HepG2 (cell line): ENCODE measurements at regions of chr15 and their contacts with region 1.

Region 1: DNA sequence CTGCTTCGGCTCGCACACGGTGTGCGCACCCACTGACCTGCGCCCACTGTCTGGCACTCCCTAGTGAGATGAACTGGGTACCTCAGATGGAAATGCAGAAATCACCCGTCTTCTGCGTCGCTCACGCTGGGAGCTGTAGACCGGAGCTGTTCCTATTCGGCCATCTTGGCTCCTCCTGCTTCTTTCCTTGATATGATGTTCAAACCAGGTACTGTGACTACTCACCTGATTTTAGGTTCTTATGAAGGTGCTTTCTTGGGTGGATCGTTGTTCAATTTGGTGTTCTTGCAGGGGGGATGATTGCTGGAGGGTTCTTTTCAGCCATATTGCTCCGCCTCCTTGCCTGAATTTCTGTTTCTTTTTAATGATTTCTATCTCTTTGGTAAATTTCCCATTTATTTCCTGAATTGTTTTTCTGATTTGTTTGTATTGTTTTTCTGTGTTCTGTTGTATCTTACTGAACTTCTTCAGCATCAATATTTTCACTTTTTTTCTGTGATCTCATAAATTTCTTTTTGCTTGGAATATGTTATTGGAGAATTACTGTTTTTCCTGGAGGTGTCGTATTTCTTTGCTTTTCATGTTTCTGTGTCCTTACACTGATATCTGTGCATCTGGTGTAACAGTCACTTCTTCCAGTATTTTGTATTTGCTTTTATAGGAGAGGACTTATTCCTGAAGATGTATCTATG is 57.1 kb downstream of the TNFAIP8L3 start:
- DNase-seq: peak; percentile 9
- ATAC-seq: peak; percentile 23; the same call in 2 of the 3 replicates
- H3K4me3 ChIP-seq: peak overlapping the region; percentile 69 to 77 (median 74)
- H3K27ac ChIP-seq: peak overlapping the region; percentile 60
- H3K4me1 ChIP-seq: peaks cover 32% of the 10 kb centered on the region
- H3K27me3 ChIP-seq: no peaks in the 10 kb centered on the region; a peak in 1 of 5 replicates
- CTCF ChIP-seq: no peak
- EP300 ChIP-seq: no peak
- POLR2A ChIP-seq: no peak
- RAD21 ChIP-seq: no peak

Region 2: DNA sequence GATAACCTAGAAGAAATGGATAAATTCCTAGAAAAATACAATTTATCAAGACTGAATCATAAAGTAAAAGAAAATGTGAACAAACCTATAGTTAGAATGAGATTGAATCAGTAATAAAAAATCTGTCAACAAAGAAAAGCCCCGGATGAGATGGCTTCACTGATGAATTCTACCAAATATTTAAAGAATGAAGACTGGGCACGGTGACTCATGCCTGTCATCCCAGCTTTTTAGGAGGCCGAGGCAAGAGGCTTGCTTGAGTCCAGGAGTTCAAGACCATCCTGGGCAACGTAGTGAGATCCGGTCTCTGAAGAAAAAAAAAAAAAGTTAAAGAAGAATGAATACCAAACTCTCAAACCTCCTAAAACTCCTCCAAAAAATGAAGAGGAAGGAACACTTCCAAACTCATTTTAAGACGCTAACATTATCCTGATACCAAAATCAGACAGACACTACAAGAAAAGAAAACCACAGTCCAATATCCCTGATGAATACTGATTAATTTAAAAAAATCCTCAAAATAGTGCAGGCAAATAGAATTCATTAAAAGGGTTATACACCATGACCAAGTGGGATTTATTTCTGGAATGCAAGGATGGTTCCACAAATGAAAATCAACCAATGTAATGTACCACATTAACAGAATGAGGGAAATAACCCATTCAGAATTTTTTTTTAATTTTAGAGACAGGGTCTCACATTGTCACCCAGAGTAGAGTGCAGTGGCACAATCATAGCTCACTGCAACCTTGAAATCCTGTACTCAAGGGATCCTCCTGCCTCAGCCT is 146.7 kb before region 1 on chr15:
- CTCF ChIA-PET with region 1: no interaction called
- POLR2A ChIA-PET with region 1: no interaction called
- in situ Hi-C with region 1: no loop called
- intact Hi-C with region 1: no loop called
- DNase-seq: no peak
- ATAC-seq: no peak
- H3K4me3 ChIP-seq: no peak overlapping the region
- H3K27ac ChIP-seq: no peak overlapping the region
- H3K4me1 ChIP-seq: no peaks in the 10 kb centered on the region
- H3K27me3 ChIP-seq: no peaks in the 10 kb centered on the region
- CTCF ChIP-seq: no peak
- EP300 ChIP-seq: no peak
- POLR2A ChIP-seq: no peak
- RAD21 ChIP-seq: no peak

Region 3: DNA sequence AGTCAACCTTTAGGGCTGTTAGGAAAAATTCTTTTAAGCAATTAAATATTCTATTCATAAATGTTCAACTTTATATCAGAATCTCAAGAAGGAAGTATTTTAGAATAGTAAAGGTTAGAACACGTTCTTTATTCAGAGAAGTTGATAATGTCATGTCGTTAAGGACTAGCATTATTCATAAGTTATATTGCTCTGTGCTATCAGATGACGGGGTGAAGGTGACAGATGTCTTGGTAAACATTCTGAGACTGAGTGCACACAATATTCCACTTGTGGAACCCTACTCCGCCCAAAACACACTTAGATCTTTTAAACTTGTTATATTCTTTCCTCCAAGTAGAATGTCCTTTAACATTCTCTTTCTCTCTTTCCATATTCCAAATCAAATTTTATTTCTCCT is 121.2 kb before region 1 on chr15:
- CTCF ChIA-PET with region 1: no interaction called
- POLR2A ChIA-PET with region 1: no interaction called
- in situ Hi-C with region 1: no loop called
- intact Hi-C with region 1: no loop called
- DNase-seq: no peak
- ATAC-seq: no peak
- H3K4me3 ChIP-seq: no peak overlapping the region
- H3K27ac ChIP-seq: no peak overlapping the region
- H3K4me1 ChIP-seq: no peaks in the 10 kb centered on the region
- H3K27me3 ChIP-seq: no peaks in the 10 kb centered on the region
- CTCF ChIP-seq: no peak
- EP300 ChIP-seq: no peak
- POLR2A ChIP-seq: no peak
- RAD21 ChIP-seq: no peak

Region 4: GRCh38 chr15:51011212-51011611 is 26.4 kb before region 1 on chr15:
- CTCF ChIA-PET with region 1: no interaction called
- POLR2A ChIA-PET with region 1: no interaction called
- in situ Hi-C with region 1: no loop called
- intact Hi-C with region 1: loop called (anchors 2 kb)
- DNase-seq: no peak
- ATAC-seq: no peak
- H3K4me3 ChIP-seq: no peak overlapping the region
- H3K27ac ChIP-seq: no peak overlapping the region
- H3K4me1 ChIP-seq: no peaks in the 10 kb centered on the region
- H3K27me3 ChIP-seq: no peaks in the 10 kb centered on the region
- CTCF ChIP-seq: no peak
- EP300 ChIP-seq: no peak
- POLR2A ChIP-seq: no peak
- RAD21 ChIP-seq: no peak